PC-3 (cell line): ENCODE measurements at regions of chr10 and their contacts with region 1.

Region 1: DNA sequence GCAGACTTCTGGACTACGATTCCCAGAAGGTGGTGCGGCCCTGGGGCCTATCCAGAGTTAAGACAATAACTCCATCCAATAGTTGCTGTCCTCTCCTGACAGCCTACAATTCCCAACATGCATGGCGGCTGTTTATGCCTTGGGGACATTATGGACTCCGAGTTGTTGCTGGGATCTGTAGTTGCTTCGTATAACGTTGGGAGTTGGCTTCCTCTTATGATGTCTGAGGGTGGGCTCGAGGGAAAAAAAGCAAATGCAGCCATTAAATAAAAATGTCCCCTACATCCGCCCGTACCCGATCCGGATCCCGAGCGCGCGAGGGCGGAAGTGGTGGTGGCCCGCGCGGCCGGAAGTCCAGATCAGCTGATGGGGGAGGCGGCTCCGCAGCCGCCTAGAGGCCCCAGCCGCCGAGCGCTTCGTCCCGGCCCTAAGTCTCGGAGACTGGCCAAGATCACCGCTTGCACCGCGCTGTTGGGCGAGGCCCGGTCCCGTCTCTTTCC is at the start of gene ZSWIM8:
- DNase-seq: peak; percentile 100
- ATAC-seq: peak; percentile 81
- H3K4me3 ChIP-seq: peak within 1 kb of the TSS; percentile 80
- H3K27ac ChIP-seq: peak within 1 kb of the TSS; percentile 36
- H3K4me1 ChIP-seq: peaks cover 38% of the 10 kb centered on the region
- H3K27me3 ChIP-seq: no peaks in the 10 kb centered on the region
- CTCF ChIP-seq: no peak
- total RNA-seq, gene ZSWIM8: 152 and 173 TPM in 2 replicates

Region 2: DNA sequence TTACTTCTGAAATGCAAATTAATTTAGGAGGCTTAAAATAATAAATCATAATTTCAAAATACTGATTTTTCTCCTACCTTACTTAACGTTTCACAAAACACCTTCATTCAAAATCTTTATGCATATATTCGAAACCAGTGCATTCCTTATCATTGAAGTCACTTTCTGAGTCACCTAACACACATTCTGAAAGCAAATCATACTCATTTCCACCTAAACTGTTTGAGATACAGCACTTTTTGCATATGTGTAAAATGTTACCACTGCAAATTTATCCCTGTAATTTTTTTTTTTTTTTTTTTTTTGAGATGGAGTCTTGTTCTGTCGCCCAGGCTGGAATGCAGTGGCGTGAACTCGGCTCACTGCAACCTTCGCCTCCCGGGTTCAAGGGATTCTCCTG is 305.1 kb before region 1 on chr10:
- CTCF ChIA-PET with region 1: no interaction called
- POLR2A ChIA-PET with region 1: no interaction called
- intact Hi-C with region 1: no loop called
- DNase-seq: peak; percentile 98
- ATAC-seq: peak; percentile 89
- H3K4me3 ChIP-seq: peak overlapping the region; percentile 0; the same call in 1 of the 2 replicates
- H3K27ac ChIP-seq: no peak overlapping the region
- H3K4me1 ChIP-seq: peaks cover 19% of the 10 kb centered on the region
- H3K27me3 ChIP-seq: no peaks in the 10 kb centered on the region
- CTCF ChIP-seq: no peak

Region 3: GRCh38 chr10:73529089-73529832 is 256.0 kb before region 1 on chr10:
- CTCF ChIA-PET with region 1: no interaction called
- POLR2A ChIA-PET with region 1: no interaction called
- intact Hi-C with region 1: no loop called
- DNase-seq: peak; percentile 99
- ATAC-seq: peak; percentile 97
- H3K4me3 ChIP-seq: no peak overlapping the region
- H3K27ac ChIP-seq: no peak overlapping the region
- H3K4me1 ChIP-seq: no peaks in the 10 kb centered on the region
- H3K27me3 ChIP-seq: no peaks in the 10 kb centered on the region
- CTCF ChIP-seq: peak; percentile 100

Region 4: DNA sequence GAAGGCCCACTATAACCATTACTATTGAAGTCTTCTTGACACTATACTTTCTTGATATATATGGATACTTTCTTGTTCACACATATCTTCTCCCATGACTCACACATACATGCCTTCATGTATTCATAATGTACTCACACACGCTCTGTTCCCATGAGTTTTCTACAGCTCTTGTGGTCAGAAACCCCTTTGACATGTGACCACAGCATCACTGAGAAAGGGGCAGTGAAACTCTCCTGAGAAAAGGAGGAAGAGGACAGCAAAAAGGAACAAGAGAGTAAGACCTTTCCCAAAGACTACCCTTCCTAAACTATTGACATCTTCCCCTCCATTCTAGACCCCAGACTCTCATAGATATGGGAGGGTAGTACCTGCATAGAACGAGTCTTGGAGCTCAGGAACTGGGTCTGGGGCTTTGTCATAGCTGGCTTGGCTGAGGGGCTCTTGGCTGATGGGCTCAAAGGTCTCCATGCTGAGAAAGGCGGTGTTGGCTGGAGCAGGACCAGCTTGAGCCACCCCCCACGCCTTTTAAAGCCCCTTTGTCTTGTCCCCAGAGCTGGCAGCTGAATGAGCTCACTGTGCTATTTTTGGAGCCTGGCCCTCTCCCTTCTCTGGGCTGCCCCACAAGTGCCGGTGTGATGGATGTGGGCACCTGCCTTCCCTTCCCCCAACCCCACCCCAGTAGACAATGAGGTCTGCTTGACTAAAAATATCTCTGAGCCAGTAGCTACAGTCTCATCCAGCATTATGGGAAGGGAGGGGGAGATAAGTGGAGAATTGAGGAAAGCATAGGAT is 134.5 kb before region 1 on chr10:
- CTCF ChIA-PET with region 1: interaction called, 4 read pairs
- POLR2A ChIA-PET with region 1: no interaction called
- intact Hi-C with region 1: loop called (anchors 5 kb)
- DNase-seq: peak; percentile 53
- ATAC-seq: no peak
- H3K4me3 ChIP-seq: no peak overlapping the region
- H3K27ac ChIP-seq: no peak overlapping the region
- H3K4me1 ChIP-seq: no peaks in the 10 kb centered on the region
- H3K27me3 ChIP-seq: no peaks in the 10 kb centered on the region
- CTCF ChIP-seq: no peak

Region 5: GRCh38 chr10:73743905-73744663 is 41.2 kb before region 1 on chr10 and contains the start of gene SEC24C:
- CTCF ChIA-PET with region 1: no interaction called
- POLR2A ChIA-PET with region 1: interaction called, 5 read pairs
- intact Hi-C with region 1: loop called (anchors 1 kb)
- DNase-seq: peak; percentile 100
- ATAC-seq: peak; percentile 83
- H3K4me3 ChIP-seq: peak within 1 kb of the TSS; percentile 68
- H3K27ac ChIP-seq: peak within 1 kb of the TSS; percentile 64
- H3K4me1 ChIP-seq: peaks cover 43% of the 10 kb centered on the region
- H3K27me3 ChIP-seq: no peaks in the 10 kb centered on the region
- CTCF ChIP-seq: no peak
- total RNA-seq, gene SEC24C: 285 and 325 TPM in 2 replicates

Region 6: GRCh38 chr10:73772280-73773151 is 12.8 kb before region 1 on chr10:
- CTCF ChIA-PET with region 1: interaction called, 3 read pairs
- POLR2A ChIA-PET with region 1: interaction called, 13 read pairs
- intact Hi-C with region 1: loop called (anchors 1 kb)
- DNase-seq: peak; percentile 99
- ATAC-seq: peak; percentile 66
- H3K4me3 ChIP-seq: peak overlapping the region; percentile 73
- H3K27ac ChIP-seq: peak overlapping the region; percentile 71
- H3K4me1 ChIP-seq: peaks cover 26% of the 10 kb centered on the region
- H3K27me3 ChIP-seq: no peaks in the 10 kb centered on the region
- CTCF ChIP-seq: peak; percentile 53

Region 7: GRCh38 chr10:73810735-73811465 is 25.6 kb after region 1 on chr10:
- CTCF ChIA-PET with region 1: no interaction called
- POLR2A ChIA-PET with region 1: interaction called, 12 read pairs
- intact Hi-C with region 1: loop called (anchors 1 kb)
- DNase-seq: peak; percentile 68
- ATAC-seq: peak; percentile 42
- H3K4me3 ChIP-seq: peak overlapping the region; percentile 79
- H3K27ac ChIP-seq: peak overlapping the region; percentile 22
- H3K4me1 ChIP-seq: peaks cover 4% of the 10 kb centered on the region
- H3K27me3 ChIP-seq: no peaks in the 10 kb centered on the region
- CTCF ChIP-seq: no peak

Region 8: DNA sequence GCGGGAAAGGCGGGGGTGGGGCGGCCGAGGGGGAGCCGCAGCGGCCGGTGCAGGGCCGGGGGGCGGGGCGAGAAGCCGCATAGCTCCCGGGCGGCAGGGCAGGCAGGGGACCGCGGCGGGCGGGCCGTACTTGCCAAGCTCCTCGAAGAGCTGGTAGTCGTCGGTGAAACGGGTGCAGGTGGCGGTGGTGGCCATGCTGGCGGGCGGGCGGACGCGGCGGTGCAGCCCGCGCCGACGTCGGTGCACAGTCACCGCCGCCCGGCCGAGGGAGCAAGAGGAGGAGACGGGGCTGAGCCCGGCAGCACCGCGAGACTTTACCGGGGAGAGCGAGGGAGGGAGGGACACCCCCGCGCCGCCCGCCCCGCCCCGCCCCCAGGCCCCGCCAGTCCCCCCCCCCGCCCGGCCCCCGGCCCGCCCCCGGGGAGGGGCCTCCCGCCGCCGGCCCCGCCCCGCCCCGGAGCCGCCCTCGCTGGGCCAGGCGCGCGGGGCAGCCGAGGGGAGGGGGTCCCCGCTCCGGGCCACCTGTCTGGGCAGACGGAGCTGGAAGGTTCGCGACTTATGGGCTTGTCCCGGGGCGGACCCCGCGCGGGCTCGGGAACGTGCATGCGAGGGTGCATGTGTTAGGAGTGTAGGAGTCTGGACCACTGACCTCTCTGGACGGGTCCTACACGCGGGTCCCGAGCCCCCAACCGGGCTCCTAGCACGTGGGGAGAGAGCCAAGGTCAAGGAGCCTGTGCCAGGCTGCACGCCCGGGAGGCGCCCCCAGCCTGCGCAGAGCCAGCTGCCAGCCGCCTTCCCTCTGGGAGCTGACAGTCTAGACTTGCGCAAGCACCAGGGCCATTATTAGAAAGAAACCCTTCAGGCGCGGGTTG is 89.2 kb after region 1 on chr10 and contains the start of gene CAMK2G:
- CTCF ChIA-PET with region 1: interaction called, 9 read pairs
- POLR2A ChIA-PET with region 1: interaction called, 15 read pairs
- intact Hi-C with region 1: no loop called
- DNase-seq: peak; percentile 100
- ATAC-seq: peak; percentile 87
- H3K4me3 ChIP-seq: peak within 1 kb of the TSS; percentile 68
- H3K27ac ChIP-seq: no peak within 1 kb of the TSS
- H3K4me1 ChIP-seq: peaks cover 48% of the 10 kb centered on the region
- H3K27me3 ChIP-seq: no peaks in the 10 kb centered on the region
- CTCF ChIP-seq: no peak
- total RNA-seq, gene CAMK2G: 170 and 179 TPM in 2 replicates

Region 9: DNA sequence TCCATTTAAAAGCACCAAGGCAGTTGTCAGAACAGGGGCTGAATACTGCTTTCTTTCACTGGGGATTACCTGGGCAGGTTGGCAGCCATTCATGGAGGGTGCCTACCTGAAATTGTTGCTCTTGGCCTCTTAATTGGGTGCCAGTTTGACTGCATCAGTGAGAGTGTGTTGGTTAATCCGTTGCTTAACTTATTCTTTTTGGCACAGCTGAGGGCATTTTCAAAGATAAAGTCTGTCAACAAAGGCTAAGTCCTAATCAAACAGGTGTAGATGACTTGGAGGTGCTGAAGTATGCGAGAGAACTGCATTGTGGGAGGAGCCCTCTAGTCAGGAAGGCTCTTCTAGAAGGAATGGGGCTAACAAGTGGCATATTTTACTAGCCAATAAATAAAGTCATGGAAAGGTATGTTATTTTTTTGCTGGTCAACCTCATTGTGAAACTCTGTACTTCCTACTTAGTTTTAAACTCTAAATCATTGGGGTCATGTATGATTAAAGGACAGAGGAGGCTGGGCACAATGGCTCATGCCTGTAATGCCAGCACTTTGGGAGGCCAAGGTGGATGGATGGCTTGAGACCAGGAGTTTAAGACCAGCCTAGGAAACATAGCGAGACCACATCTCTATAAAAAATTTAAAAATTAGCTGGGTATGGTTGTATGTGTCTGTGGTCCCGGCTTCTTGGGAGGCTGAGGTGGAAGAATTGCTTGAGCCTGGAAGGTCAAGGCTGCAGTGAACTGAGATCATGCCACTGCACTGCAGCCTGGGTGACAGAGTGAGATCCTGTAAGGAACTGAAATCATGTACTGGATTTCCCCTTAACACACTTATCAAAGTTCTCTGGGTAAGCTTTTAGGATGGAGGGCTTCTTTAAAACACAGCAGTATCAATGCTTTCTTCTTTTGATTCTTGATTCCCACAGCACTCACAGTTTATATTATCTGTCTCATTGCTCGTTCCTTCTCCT is 1780.3 kb after region 1 on chr10:
- CTCF ChIA-PET with region 1: no interaction called
- POLR2A ChIA-PET with region 1: no interaction called
- intact Hi-C with region 1: no loop called
- DNase-seq: no peak
- ATAC-seq: no peak
- H3K4me3 ChIP-seq: no peak overlapping the region
- H3K27ac ChIP-seq: no peak overlapping the region
- H3K4me1 ChIP-seq: no peaks in the 10 kb centered on the region
- H3K27me3 ChIP-seq: no peaks in the 10 kb centered on the region
- CTCF ChIP-seq: no peak